Activated CD4-positive, alpha-beta memory T cell treated with anti-CD3 and anti-CD28 coated beads for 36 hours (primary cell): ENCODE measurements at regions of chr1 and their contacts with region 1.

Region 1: GRCh38 chr1:234271243-234271606 is 102.0 kb upstream of the COA6 start:
- DNase-seq: no peak
- H3K4me3 Mint-ChIP-seq: no peak overlapping the region
- H3K27ac Mint-ChIP-seq: no peak overlapping the region
- H3K4me1 Mint-ChIP-seq: peaks cover 32% of the 10 kb centered on the region
- H3K27me3 Mint-ChIP-seq: peaks cover 30% of the 10 kb centered on the region

Region 2: GRCh38 chr1:233613252-233614174 is 657.7 kb before region 1 on chr1 and contains the start of gene KCNK1:
- CTCF ChIA-PET with region 1: no interaction called
- POLR2A ChIA-PET with region 1: no interaction called
- intact Hi-C with region 1: loop called (anchors 2 kb)
- DNase-seq: peak; percentile 50
- H3K4me3 Mint-ChIP-seq: peak within 1 kb of the TSS; percentile 78
- H3K27ac Mint-ChIP-seq: peak within 1 kb of the TSS; percentile 66
- H3K4me1 Mint-ChIP-seq: peaks cover 29% of the 10 kb centered on the region
- H3K27me3 Mint-ChIP-seq: peaks cover 64% of the 10 kb centered on the region
- total RNA-seq, gene KCNK1: 5.0 to 5.2 TPM

Region 3: GRCh38 chr1:234149217-234149616 is 122.0 kb before region 1 on chr1:
- CTCF ChIA-PET with region 1: no interaction called
- POLR2A ChIA-PET with region 1: no interaction called
- intact Hi-C with region 1: loop called (anchors 2 kb)
- DNase-seq: no peak
- H3K4me3 Mint-ChIP-seq: no peak overlapping the region
- H3K27ac Mint-ChIP-seq: no peak overlapping the region
- H3K4me1 Mint-ChIP-seq: peaks cover 25% of the 10 kb centered on the region
- H3K27me3 Mint-ChIP-seq: peaks cover 31% of the 10 kb centered on the region

Region 4: GRCh38 chr1:234212764-234213657 is 58.2 kb before region 1 on chr1:
- CTCF ChIA-PET with region 1: no interaction called
- POLR2A ChIA-PET with region 1: no interaction called
- intact Hi-C with region 1: loop called (anchors 2 kb)
- DNase-seq: peak; percentile 32
- H3K4me3 Mint-ChIP-seq: no peak overlapping the region
- H3K27ac Mint-ChIP-seq: no peak overlapping the region
- H3K4me1 Mint-ChIP-seq: peaks cover 16% of the 10 kb centered on the region
- H3K27me3 Mint-ChIP-seq: peaks cover 33% of the 10 kb centered on the region

Region 5: DNA sequence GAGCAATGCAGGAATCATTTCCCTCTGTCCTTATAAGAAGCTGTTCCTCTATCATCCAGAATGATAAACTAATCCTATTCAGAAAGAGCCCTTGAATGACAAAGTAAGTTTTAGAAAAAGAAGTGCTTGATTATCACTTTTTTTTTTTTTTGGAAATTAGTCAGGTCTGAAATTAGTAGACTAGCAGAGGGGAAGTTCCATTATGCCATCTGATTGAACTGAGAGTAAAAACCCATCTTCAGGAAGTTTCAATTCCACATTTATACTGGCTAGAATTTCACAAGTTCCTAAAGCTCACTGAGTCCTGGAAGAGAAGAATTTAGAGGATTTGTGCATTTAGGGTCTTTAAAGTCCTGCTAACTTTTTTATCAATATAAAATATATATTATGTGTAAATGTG is 26.7 kb before region 1 on chr1:
- CTCF ChIA-PET with region 1: interaction called, 3 read pairs
- POLR2A ChIA-PET with region 1: interaction called, 5 read pairs
- intact Hi-C with region 1: loop called (anchors 1 kb)
- DNase-seq: no peak
- H3K4me3 Mint-ChIP-seq: no peak overlapping the region
- H3K27ac Mint-ChIP-seq: no peak overlapping the region
- H3K4me1 Mint-ChIP-seq: peaks cover 26% of the 10 kb centered on the region
- H3K27me3 Mint-ChIP-seq: peaks cover 20% of the 10 kb centered on the region

Region 6: DNA sequence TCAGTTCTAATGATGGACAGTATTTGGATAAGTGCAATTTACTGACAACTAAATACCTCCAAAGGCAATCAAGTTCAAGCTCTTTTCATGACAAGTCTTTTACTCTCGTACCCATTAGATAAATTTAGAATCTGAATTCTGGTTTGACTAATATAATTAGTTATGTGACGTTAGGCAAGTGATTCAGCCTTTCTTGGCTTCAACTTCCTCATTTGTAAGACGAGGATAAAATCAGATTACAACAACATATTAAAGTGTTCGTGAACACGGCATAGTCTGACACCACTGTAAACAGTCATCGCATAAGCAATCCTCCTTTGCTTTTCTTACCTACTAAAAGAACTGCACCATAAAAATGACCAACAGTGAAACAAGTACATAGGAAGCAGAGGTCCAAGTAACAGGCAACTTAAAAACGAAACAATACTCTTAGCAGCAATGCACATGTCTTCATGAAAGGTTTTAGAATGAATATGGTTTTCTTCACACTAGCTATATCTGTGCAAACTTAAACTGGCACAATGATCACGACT is 127.7 kb after region 1 on chr1:
- CTCF ChIA-PET with region 1: no interaction called
- POLR2A ChIA-PET with region 1: no interaction called
- intact Hi-C with region 1: loop called (anchors 2 kb)
- DNase-seq: no peak
- H3K4me3 Mint-ChIP-seq: peak overlapping the region; percentile 66
- H3K27ac Mint-ChIP-seq: peak overlapping the region; percentile 92
- H3K4me1 Mint-ChIP-seq: peaks cover 53% of the 10 kb centered on the region
- H3K27me3 Mint-ChIP-seq: no peaks in the 10 kb centered on the region

Region 7: DNA sequence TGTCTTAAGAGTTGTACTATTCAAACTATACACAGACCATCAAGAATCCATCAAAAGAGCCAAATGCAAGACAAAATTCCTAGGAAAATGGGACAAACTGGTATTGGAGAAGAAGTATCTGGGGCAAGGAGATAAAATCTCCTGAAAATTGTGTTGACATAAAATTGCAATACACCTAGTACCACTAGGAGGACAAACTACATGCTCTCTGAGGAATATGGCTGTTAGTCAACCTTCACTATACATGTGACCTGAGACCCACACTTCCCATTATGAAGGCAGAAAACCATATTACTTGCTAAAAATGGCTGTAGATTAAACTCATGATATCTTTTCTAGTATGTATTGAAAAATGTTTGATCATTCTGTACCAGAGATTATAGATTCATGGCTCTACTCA is 308.7 kb after region 1 on chr1:
- CTCF ChIA-PET with region 1: no interaction called
- POLR2A ChIA-PET with region 1: no interaction called
- intact Hi-C with region 1: no loop called
- DNase-seq: no peak
- H3K4me3 Mint-ChIP-seq: no peak overlapping the region
- H3K27ac Mint-ChIP-seq: no peak overlapping the region
- H3K4me1 Mint-ChIP-seq: no peaks in the 10 kb centered on the region
- H3K27me3 Mint-ChIP-seq: no peaks in the 10 kb centered on the region